GM18951 (cell line): ENCODE measurements at regions of chr1 and their contacts with region 1.

Region 1: DNA sequence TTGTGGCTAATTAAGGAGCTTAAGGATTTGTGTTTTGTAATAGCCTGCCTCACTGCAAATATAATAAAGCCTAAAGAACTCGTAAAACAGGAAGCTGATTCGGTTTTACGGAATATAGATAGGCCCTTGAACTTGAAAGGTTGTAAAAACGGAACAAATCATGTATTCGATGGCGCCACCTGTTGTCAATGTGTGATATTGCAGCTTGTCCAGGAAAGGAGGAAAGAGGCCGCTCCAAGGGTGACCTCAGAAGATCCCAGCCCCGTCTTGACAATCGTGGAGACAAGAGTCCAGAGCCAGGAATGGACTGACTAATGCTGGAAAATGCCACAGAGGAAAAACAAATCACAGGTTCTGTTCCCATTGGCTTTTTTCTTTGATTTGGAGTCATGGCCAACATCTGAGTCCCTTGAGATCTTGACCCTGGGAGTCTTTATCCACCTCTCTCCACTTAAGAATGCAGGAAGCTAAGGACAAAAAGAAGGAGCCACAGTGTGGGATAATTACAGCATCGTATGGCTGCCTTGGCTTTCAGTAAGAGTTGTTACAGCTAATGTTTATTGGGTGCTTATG is 7.0 kb upstream of the IGSF21 start:
- POLR2A ChIP-seq: no peak

Region 2: GRCh38 chr1:17661546-17662157 is 438.9 kb before region 1 on chr1:
- in situ Hi-C with region 1: loop called (anchors 25 kb)
- POLR2A ChIP-seq: no peak